ENCODE measurements at regions of chr1 and their contacts with region 1.

Region 1: DNA sequence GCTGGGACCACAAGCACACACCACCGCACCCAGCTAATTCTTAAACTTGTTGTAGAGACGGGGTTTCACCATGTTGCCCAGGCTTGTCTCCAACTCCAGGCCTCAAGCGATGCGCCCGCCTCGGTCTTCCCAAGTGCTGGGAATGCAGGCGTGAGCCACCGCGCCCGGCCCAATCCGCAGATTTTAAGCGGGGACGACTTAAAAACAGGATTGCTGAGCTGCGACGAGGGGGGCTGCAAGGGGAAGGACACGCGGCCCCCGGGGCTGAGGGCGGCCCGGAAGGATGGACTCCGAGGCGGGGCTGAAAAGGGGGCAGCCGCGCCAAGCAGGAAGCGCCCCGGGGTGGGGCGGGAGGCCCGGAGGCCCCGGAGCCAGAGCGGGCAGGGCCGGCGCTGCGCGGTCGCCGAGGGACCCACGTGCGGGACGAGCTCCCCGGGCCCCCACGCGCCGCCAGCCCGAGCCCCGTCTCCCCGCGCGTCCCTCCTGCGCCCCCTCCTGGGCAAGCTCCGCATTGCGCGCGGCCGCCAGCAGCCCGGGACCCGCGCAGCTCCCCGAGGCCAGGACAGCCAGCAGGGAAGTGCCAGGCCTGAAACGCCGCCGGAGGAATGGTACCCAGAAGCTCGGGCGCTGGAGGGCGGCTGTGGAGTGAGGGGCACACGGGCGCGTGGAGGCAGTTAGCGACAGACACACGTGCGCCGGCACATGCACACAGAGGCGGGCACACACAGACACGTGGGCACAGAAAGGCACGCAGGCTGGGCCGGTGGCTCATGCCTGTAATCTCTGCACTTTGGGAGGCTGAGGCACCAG is 5.5 kb upstream of the PRKCZ start:
- DNase-seq: peak; percentile 78
- ATAC-seq: peak; percentile 83
- H3K4me3 Mint-ChIP-seq: peak overlapping the region; percentile 71
- H3K27ac Mint-ChIP-seq: peak overlapping the region; percentile 8
- H3K4me1 Mint-ChIP-seq: peaks cover 22% of the 10 kb centered on the region
- H3K27me3 Mint-ChIP-seq: peaks cover 6% of the 10 kb centered on the region
- CTCF ChIP-seq: peak; percentile 95

Region 2: GRCh38 chr1:1894354-1895059 is 150.2 kb before region 1 on chr1:
- CTCF ChIA-PET with region 1: no interaction called
- POLR2A ChIA-PET with region 1: no interaction called
- intact Hi-C with region 1: no loop called
- DNase-seq: no peak
- ATAC-seq: no peak
- H3K4me3 Mint-ChIP-seq: no peak overlapping the region
- H3K27ac Mint-ChIP-seq: no peak overlapping the region
- H3K4me1 Mint-ChIP-seq: peaks cover 31% of the 10 kb centered on the region
- H3K27me3 Mint-ChIP-seq: peaks cover 2% of the 10 kb centered on the region
- CTCF ChIP-seq: no peak

Region 3: DNA sequence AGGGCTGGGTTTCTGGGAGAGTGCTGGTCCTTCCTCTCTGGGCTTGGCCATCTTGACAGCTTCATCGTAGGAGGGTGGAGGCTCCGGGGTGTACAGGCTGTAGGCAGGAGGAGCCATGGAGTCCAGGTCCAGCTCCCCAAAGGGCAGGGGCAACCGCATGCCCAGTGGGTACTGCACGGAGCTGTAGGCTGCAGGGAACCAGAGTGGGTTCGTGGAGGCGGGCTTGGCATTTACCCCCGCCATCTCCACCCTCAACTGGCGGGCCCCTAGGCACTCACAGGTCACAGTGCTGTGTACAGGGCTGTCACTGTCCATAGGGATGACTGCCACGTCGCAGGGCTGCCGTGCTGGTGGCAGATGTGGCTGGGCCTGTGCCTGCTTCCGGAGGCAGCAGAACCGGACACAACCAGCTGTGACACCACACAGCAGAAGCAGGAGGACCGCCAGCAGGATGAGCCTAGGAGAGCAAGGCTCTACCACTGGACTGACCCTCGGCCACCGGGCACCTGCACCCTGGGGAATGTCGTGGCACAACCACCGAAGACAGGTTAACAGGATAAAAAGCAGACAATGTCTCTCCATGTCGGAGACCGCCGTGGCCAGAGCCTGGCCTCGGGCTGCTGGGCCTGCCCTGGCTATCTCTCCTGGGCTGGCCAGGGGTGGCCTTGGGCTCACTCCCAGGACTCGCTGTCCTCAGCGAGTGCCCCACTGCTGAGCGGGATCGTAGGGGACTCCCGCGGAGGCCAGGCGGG is 126.6 kb before region 1 on chr1:
- CTCF ChIA-PET with region 1: interaction called, 10 read pairs
- POLR2A ChIA-PET with region 1: no interaction called
- intact Hi-C with region 1: no loop called
- DNase-seq: no peak
- ATAC-seq: no peak
- H3K4me3 Mint-ChIP-seq: peak overlapping the region; percentile 50
- H3K27ac Mint-ChIP-seq: no peak overlapping the region
- H3K4me1 Mint-ChIP-seq: peaks cover 3% of the 10 kb centered on the region
- H3K27me3 Mint-ChIP-seq: peaks cover 3% of the 10 kb centered on the region
- CTCF ChIP-seq: no peak

Region 4: GRCh38 chr1:1943834-1944570 is 100.7 kb before region 1 on chr1:
- CTCF ChIA-PET with region 1: interaction called, 34 read pairs
- POLR2A ChIA-PET with region 1: no interaction called
- intact Hi-C with region 1: no loop called
- DNase-seq: peak; percentile 75
- ATAC-seq: peak; percentile 100
- H3K4me3 Mint-ChIP-seq: no peak overlapping the region
- H3K27ac Mint-ChIP-seq: no peak overlapping the region
- H3K4me1 Mint-ChIP-seq: peaks cover 3% of the 10 kb centered on the region
- H3K27me3 Mint-ChIP-seq: no peaks in the 10 kb centered on the region
- CTCF ChIP-seq: peak; percentile 94

Region 5: DNA sequence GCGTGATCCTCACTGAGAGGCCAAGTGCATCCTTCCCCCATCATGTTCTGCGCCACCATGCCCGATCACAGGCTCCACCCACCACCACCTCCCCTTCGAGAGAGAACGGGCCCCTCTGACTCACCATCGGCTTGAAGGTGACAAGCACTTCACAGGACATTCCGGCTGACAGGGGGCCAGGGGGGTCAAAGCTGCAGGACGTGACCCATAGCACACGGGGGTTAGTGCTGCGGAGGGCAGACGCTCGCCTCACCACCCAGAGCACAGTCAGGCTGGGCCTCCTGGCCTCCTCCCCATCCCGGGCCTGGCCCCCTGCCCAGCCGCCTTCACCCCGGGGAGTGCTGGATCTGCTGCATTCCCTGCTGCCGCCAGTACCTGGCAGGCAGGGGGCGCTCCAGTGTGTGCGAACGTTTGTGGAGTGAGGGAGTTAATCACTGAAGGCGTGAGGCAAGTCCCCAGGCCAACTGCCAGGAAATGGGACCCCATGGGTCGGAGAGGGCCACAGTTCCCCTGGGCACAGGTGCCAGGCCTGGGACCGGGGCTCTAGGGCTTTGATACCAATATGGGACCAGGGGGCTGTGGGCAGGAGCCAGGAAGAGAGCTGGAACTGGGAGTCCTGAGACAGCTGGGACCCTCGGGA is 84.8 kb before region 1 on chr1:
- CTCF ChIA-PET with region 1: interaction called, 100 read pairs
- POLR2A ChIA-PET with region 1: interaction called, 3 read pairs
- intact Hi-C with region 1: loop called (anchors 5 kb)
- DNase-seq: peak; percentile 93
- ATAC-seq: peak; percentile 95
- H3K4me3 Mint-ChIP-seq: peak overlapping the region; percentile 46
- H3K27ac Mint-ChIP-seq: peak overlapping the region; percentile 79
- H3K4me1 Mint-ChIP-seq: peaks cover 13% of the 10 kb centered on the region
- H3K27me3 Mint-ChIP-seq: peaks cover 29% of the 10 kb centered on the region
- CTCF ChIP-seq: peak; percentile 92

Region 6: DNA sequence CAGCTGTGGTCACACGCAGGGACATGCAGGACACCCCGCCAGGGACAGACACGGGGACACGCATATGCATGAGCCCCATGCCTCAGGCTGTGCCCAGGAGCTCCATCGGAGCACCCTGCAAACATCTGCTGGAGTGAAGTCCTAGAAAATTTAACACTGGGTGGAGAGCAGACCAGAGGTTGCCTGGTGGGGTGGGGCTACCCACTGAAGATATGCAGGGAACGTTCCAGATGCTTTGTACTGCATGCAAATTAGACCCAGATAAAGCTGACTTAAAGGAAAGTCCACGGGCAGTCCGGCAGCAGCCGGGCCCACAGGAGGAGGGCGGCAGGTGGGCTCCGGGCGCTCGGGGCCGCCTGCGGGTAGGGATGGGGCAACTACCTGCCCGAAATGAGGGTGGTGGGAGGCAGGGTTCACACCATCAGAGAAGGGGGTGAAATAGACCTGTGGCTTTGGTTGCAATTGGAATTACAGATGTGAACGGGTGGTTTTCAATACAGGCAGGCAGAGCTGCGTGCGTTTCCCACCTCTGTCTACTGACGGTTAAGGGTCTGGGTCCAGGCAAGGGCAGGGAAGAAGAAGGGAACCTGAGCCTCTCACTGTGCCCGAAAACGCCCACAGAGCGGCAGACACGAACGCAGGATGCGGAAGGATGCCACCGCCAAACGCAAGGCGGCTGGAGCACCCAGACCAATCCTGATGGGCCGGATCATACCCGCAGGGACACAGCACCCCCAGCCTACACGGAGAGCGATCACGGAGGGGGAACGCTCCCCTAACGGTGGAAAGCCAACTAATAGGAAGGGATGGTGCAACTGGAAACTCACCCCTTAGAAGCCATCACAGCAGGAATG is 62.1 kb before region 1 on chr1:
- CTCF ChIA-PET with region 1: no interaction called
- POLR2A ChIA-PET with region 1: no interaction called
- intact Hi-C with region 1: no loop called
- DNase-seq: no peak
- ATAC-seq: no peak
- H3K4me3 Mint-ChIP-seq: no peak overlapping the region
- H3K27ac Mint-ChIP-seq: no peak overlapping the region
- H3K4me1 Mint-ChIP-seq: no peaks in the 10 kb centered on the region
- H3K27me3 Mint-ChIP-seq: no peaks in the 10 kb centered on the region
- CTCF ChIP-seq: no peak

Region 7: GRCh38 chr1:2025534-2025981 is 19.2 kb before region 1 on chr1:
- CTCF ChIA-PET with region 1: interaction called, 11 read pairs
- POLR2A ChIA-PET with region 1: no interaction called
- intact Hi-C with region 1: no loop called
- DNase-seq: peak; percentile 40
- ATAC-seq: peak; percentile 53
- H3K4me3 Mint-ChIP-seq: no peak overlapping the region
- H3K27ac Mint-ChIP-seq: no peak overlapping the region
- H3K4me1 Mint-ChIP-seq: no peaks in the 10 kb centered on the region
- H3K27me3 Mint-ChIP-seq: peaks cover 17% of the 10 kb centered on the region
- CTCF ChIP-seq: no peak

Region 8: GRCh38 chr1:2033165-2033564 is 11.6 kb before region 1 on chr1:
- CTCF ChIA-PET with region 1: interaction called, 10 read pairs
- POLR2A ChIA-PET with region 1: no interaction called
- intact Hi-C with region 1: no loop called
- DNase-seq: no peak
- ATAC-seq: no peak
- H3K4me3 Mint-ChIP-seq: no peak overlapping the region
- H3K27ac Mint-ChIP-seq: no peak overlapping the region
- H3K4me1 Mint-ChIP-seq: no peaks in the 10 kb centered on the region
- H3K27me3 Mint-ChIP-seq: no peaks in the 10 kb centered on the region
- CTCF ChIP-seq: no peak

Region 9: DNA sequence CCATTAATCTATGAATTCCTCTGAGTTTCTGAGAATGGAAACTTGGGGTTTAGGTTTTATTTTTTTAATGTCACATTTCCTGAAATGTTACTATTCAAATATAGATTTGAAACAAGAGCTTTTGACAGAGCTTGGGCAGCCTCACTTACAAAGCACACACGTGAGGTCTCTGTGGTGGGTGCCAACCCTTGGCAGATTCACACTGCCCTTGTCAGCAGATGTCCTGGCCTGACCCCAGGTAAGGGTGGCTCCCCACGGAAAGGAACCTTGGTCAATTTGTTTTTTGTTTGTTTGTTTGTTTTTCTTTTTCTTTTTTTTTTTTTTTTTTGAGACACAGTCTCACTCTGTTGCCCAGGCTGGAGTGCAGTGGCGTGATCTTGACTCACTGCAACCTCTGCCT is 96.3 kb after region 1 on chr1:
- CTCF ChIA-PET with region 1: interaction called, 16 read pairs
- POLR2A ChIA-PET with region 1: no interaction called
- intact Hi-C with region 1: no loop called
- DNase-seq: no peak
- ATAC-seq: peak; percentile 35
- H3K4me3 Mint-ChIP-seq: no peak overlapping the region
- H3K27ac Mint-ChIP-seq: no peak overlapping the region
- H3K4me1 Mint-ChIP-seq: peaks cover 22% of the 10 kb centered on the region
- H3K27me3 Mint-ChIP-seq: no peaks in the 10 kb centered on the region
- CTCF ChIP-seq: no peak

Region 10: DNA sequence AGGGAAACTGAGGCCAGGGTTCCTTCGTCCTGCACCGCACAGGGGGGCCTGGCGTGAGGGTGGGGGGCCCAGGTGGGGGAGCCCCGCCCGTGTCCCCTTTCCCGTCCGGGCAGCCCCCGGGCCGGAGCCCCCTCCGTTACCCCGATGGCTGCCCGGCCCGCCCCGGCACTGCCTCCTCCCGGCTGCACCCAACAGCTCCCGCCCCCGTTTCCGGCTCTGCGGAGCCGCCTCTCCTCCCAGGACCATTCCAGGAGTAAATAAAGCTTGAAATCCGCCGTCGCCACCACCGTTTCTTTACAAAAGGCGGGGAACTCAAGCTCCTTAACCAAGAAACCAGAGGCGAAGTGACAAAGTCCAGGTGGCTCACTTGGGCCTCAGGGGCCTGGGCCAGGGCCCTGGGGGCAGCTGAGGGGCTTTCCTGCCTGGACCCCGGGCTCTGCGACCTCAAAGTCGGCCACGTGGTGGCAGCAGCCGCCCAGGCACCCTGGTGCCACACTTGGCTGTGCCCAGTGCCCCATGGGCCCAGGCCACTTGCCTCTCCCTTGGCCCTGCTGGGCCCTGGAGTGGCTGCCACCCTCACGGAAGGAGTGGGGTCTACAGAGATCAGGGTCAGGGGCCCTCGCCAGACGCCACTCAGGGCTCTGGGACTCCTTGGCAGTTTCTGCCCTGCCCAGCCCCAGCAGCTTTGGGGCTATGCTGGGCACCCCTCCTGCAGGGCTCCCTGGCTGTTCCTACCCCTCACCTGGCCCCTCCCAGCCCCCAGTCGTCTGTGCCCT is 150.4 kb after region 1 on chr1:
- CTCF ChIA-PET with region 1: no interaction called
- POLR2A ChIA-PET with region 1: no interaction called
- intact Hi-C with region 1: no loop called
- DNase-seq: peak; percentile 93
- ATAC-seq: peak; percentile 69
- H3K4me3 Mint-ChIP-seq: peak overlapping the region; percentile 83
- H3K27ac Mint-ChIP-seq: peak overlapping the region; percentile 96
- H3K4me1 Mint-ChIP-seq: peaks cover 33% of the 10 kb centered on the region
- H3K27me3 Mint-ChIP-seq: no peaks in the 10 kb centered on the region
- CTCF ChIP-seq: peak; percentile 97

Measured in activated CD8-positive, alpha-beta T cell treated with anti-CD3 and anti-CD28 coated beads for 36 hours (primary cell).